ENCODE measurements at regions of chr15 and their contacts with region 1.

Region 1: DNA sequence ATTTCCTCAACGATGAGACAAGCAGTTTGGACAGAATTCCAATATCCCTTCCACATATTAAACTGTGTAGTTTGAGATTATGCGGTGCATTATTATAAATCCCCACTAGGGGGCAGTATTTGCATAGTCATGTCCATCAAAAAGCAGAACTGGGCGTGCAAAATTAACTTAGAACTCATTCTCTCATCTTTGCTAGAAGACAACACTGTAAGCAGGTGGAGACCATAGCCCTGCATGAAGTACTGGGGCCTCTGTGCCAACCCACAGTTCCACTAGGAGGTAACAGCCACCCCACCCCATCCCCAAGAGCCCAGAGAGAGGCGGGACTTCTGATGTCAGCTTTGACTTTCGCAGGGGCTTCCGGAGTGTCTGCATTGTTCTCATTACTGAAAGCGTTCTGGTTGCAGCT is 106.6 kb upstream of the TMC3 start:
- DNase-seq: peak in 1 of 3 donors; percentile 35
- ATAC-seq: peak; percentile 64 to 68
- H3K4me3 ChIP-seq: no peak overlapping the region
- H3K27ac ChIP-seq: no peak overlapping the region
- H3K4me1 ChIP-seq: no peaks in the 10 kb centered on the region
- H3K27me3 ChIP-seq: no peaks in the 10 kb centered on the region

Region 2: DNA sequence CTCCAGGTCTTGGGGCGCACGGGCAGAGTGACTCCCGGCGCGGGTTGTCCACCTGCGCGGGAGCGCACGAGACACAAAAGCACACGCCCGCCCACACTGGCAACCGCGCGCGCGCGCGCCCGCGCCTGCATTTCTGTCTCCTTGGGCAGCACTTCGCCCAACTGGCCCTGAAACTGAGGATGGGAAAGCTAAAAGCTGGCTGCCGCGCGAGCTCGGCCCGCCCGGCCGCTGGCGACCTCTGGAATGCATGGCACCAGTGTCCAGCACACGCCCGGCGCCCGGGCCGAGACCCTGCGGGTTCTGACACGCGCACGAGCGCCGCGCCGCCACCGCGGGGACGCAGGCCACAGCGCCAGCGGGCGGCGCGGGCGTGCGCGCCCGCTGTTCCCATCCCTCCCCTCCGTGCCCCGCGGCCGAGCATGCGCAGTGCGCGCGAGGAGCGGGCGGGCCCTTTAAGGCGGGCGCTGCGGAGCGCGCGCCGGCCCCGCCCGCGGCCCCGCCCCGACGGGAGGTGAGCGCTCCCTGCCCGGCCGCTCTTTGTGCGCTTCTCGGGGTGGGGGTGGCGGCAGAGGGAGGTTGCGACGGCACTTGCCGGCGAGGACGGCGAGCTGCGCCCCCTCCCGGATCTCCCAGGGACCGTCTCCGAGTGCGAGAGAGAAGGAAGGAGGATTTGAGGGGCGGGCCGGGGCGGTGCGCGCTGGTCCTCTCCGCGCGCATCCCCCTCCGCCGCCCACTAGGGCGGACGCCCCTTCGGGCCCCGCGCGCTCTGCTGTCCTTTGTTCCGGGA is 566.2 kb after region 1 on chr15:
- intact Hi-C with region 1: loop called in 2 of 4 experiments (anchors 5 to 10 kb)
- DNase-seq: peak; percentile 91 to 97 (median 97)
- ATAC-seq: peak; percentile 84 to 91
- H3K4me3 ChIP-seq: peak overlapping the region; percentile 79
- H3K27ac ChIP-seq: peak overlapping the region; percentile 96
- H3K4me1 ChIP-seq: no peaks in the 10 kb centered on the region
- H3K27me3 ChIP-seq: no peaks in the 10 kb centered on the region

Region 3: GRCh38 chr15:82139823-82140268 is 659.2 kb after region 1 on chr15:
- intact Hi-C with region 1: loop called in 1 of 4 experiments (anchors 10 kb)
- DNase-seq: no peak
- ATAC-seq: no peak
- H3K4me3 ChIP-seq: peak overlapping the region; percentile 27
- H3K27ac ChIP-seq: no peak overlapping the region
- H3K4me1 ChIP-seq: no peaks in the 10 kb centered on the region
- H3K27me3 ChIP-seq: no peaks in the 10 kb centered on the region

Region 4: GRCh38 chr15:82197733-82198594 is 717.3 kb after region 1 on chr15:
- intact Hi-C with region 1: loop called in 2 of 4 experiments (anchors 5 to 10 kb)
- DNase-seq: peak; percentile 60 to 80 (median 61)
- ATAC-seq: peak; percentile 91 to 93
- H3K4me3 ChIP-seq: no peak overlapping the region
- H3K27ac ChIP-seq: no peak overlapping the region
- H3K4me1 ChIP-seq: no peaks in the 10 kb centered on the region
- H3K27me3 ChIP-seq: no peaks in the 10 kb centered on the region

Measured in right cardiac atrium (tissue), 5 donors.